ENCODE measurements at regions of chr1 and their contacts with region 1.

Region 1: DNA sequence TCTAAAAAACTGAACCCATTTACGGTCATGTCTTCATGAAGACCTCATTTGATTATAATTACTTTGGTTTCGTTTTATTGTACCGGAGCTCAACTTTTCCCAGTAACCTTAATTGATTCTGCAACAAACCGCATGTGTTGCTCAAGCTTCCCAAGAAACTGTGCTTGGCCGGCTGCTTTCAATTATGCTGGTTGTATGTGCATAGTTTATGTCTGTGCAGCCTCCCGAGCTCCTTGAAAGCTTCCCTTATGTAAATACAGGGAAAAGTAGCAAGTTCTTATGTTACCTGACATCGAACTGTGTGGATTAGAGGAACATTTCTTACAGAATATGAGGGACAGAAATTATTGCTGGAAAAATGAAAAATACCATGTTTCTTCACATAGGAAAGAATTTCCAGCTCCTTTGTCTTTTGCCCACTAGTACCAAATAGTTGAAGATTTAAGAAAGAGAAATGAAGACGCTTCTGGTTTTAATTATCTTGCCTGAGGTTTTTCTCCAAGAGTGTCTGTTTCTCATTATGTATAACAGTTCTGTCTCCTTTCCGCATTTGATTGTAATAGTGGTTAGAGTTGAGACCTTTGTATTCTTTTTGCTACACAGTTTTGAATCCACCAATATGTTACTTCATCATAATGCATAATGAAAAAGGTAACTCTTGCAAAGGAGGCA is 2.1 kb downstream of the VCAM1 start:
- DNase-seq: no peak
- ATAC-seq: no peak
- H3K4me3 ChIP-seq: no peak overlapping the region
- H3K27ac ChIP-seq: no peak overlapping the region
- H3K4me1 ChIP-seq: no peaks in the 10 kb centered on the region
- H3K27me3 ChIP-seq: no peaks in the 10 kb centered on the region
- CTCF ChIP-seq: no peak
- EP300 ChIP-seq: no peak
- POLR2A ChIP-seq: no peak
- RAD21 ChIP-seq: no peak

Region 2: GRCh38 chr1:100613817-100614559 is 107.7 kb before region 1 on chr1:
- CTCF ChIA-PET with region 1: no interaction called
- POLR2A ChIA-PET with region 1: no interaction called
- RAD21 ChIA-PET with region 1: interaction called, 3 read pairs
- SMC1A ChIA-PET with region 1: interaction called, 8 read pairs
- in situ Hi-C with region 1: no loop called
- intact Hi-C with region 1: loop called (anchors 5 kb)
- DNase-seq: no peak
- ATAC-seq: peak; percentile 51
- H3K4me3 ChIP-seq: no peak overlapping the region
- H3K27ac ChIP-seq: no peak overlapping the region
- H3K4me1 ChIP-seq: no peaks in the 10 kb centered on the region
- H3K27me3 ChIP-seq: no peaks in the 10 kb centered on the region
- CTCF ChIP-seq: no peak
- EP300 ChIP-seq: no peak
- POLR2A ChIP-seq: no peak
- RAD21 ChIP-seq: no peak